A673 (cell line): ENCODE measurements at regions of chr9 and their contacts with region 1.

Region 1: DNA sequence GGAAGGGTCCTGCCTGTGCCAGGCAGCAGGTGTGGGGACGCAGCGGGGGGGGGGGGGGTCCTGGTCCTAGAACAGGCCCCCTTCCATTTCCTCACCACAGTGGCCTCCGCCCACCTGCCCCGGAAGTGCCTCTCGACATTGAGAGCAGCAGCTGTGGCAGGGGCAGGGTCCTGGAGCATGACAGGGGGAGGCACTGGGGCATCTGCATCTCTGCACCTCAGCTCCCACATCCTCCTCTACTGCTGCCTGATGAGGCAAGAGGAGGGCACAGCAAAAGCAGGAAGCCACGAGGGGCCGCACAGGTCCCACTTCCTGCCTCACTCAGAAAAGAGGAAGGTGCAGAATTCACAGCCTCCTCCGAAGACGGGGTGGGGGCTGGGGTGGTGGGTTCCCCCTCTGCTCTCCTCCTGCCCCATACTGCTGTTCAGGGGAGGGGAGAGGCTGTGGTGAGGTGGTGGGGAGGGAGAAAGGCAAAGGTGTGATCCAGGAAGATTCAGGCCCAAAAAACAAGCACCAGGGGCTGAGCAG is 14.8 kb downstream of the AKNA start:
- DNase-seq: no peak
- H3K4me3 ChIP-seq: no peak overlapping the region
- H3K27ac ChIP-seq: no peak overlapping the region
- H3K4me1 ChIP-seq: peaks cover 10% of the 10 kb centered on the region
- H3K27me3 ChIP-seq: no peaks in the 10 kb centered on the region
- CTCF ChIP-seq: no peak

Region 2: DNA sequence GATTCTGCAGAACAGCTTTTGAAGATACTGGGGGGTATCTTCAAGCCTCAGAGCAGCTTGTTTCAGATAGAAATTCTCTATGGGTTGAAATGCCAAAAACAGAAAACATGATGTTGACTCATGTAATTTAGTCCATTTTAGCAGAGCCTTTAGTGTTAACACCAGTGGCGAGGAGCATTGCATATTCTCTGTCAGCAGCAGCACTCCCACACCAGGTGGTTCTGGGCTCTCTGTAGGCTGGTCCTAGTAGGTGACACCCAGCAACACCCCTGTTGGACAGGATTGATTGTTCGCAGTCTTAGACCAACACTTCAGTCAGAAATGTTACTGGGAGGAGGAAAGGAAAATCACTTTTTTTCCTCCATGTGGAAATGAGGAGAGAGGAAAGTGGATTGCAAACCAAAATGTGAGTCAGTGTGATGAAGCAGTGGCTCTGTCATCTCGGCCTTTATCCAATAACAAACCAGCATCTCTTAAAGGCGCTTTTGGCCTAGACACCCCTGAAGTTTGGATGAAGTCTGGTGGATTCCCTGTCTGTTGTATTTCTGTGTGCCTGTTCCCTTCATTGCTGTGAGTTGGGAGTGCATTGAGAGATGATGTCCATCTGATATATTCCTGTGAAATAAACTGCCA is 1499.1 kb before region 1 on chr9:
- CTCF ChIA-PET with region 1: no interaction called
- POLR2A ChIA-PET with region 1: interaction called, 10 read pairs
- intact Hi-C with region 1: no loop called
- DNase-seq: no peak
- H3K4me3 ChIP-seq: no peak overlapping the region
- H3K27ac ChIP-seq: no peak overlapping the region
- H3K4me1 ChIP-seq: no peaks in the 10 kb centered on the region
- H3K27me3 ChIP-seq: no peaks in the 10 kb centered on the region
- CTCF ChIP-seq: no peak

Region 3: GRCh38 chr9:114233491-114234185 is 139.3 kb before region 1 on chr9:
- CTCF ChIA-PET with region 1: no interaction called
- POLR2A ChIA-PET with region 1: no interaction called
- intact Hi-C with region 1: no loop called
- DNase-seq: no peak
- H3K4me3 ChIP-seq: no peak overlapping the region
- H3K27ac ChIP-seq: no peak overlapping the region
- H3K4me1 ChIP-seq: no peaks in the 10 kb centered on the region
- H3K27me3 ChIP-seq: no peaks in the 10 kb centered on the region
- CTCF ChIP-seq: no peak

Region 4: DNA sequence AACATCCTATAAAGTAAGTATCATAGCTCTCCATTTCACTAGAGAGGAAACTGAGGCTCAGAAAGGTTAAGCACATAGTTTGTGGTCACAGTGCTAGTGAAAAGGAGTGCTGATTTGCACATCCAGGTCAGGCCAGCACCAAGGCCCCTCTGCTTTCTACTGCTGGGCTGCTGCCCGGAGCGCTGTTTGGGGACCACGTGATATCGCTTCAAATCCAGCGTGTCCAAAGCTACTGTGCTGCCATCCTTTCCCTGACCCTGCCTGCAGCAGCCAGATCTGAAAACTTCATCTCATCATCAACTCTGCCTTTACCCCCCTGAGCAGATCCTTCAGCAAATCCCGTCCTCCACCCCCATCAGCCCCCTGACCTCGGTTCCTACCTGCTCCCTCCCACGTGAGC is 55.5 kb after region 1 on chr9:
- CTCF ChIA-PET with region 1: no interaction called
- POLR2A ChIA-PET with region 1: no interaction called
- intact Hi-C with region 1: loop called (anchors 5 kb)
- DNase-seq: no peak
- H3K4me3 ChIP-seq: no peak overlapping the region
- H3K27ac ChIP-seq: no peak overlapping the region
- H3K4me1 ChIP-seq: no peaks in the 10 kb centered on the region
- H3K27me3 ChIP-seq: no peaks in the 10 kb centered on the region
- CTCF ChIP-seq: no peak